Heart left ventricle (tissue), 16 donors: ENCODE measurements at regions of chr2 and their contacts with region 1.

Region 1: DNA sequence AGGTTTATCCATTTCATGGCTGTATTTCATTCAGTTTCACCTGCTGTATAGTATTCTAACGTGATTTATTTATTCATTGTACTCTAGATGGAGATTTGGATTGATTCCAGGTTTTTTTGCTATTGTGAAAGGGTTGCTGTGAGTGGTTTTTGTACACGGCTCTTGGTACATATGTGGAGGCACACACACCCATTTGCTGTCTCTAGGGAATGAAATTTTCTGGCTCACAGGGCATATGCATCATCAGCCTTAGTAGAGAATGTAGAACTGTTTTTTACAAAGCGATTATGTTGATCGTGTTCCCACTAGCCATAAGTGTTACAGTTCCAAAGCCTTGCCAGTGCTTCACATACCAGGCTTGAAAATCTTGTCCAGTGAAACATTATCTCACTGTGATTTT is 5.1 kb downstream of the SPTBN1 start:
- DNase-seq: no peak
- ATAC-seq: peak; percentile 21 to 50 (median 34)
- H3K4me3 ChIP-seq: peak overlapping the region in 3 of 12 donors; percentile 2 to 86 (median 17)
- H3K27ac ChIP-seq: peak overlapping the region in 11 of 12 donors; percentile 55 to 99 (median 96)
- H3K4me1 ChIP-seq: peaks cover 21 to 83% (median 65%) of the 10 kb centered on the region in 12 donors
- H3K27me3 ChIP-seq: peaks cover 0 to 22% (median 0%) of the 10 kb centered on the region in 9 donors
- CTCF ChIP-seq: no peak
- POLR2A ChIP-seq: no peak

Region 2: GRCh38 chr2:54497763-54498680 is 36.8 kb after region 1 on chr2:
- intact Hi-C with region 1: loop called in 3 of 10 experiments (anchors 5 kb)
- DNase-seq: peak in 3 of 5 donors; percentile 50 to 64 (median 52)
- ATAC-seq: peak in 3 of 4 donors; percentile 59 to 73 (median 70)
- H3K4me3 ChIP-seq: no peak overlapping the region
- H3K27ac ChIP-seq: peak overlapping the region in 11 of 12 donors; percentile 2 to 61 (median 53)
- H3K4me1 ChIP-seq: peaks cover 34 to 100% (median 83%) of the 10 kb centered on the region in 12 donors
- H3K27me3 ChIP-seq: no peaks in the 10 kb centered on the region
- CTCF ChIP-seq: peak; percentile 20 to 67 (median 46)
- POLR2A ChIP-seq: no peak